ENCODE measurements at regions of chr11 and their contacts with region 1.

Region 1: GRCh38 chr11:75814686-75815344 is at the start of gene UVRAG:
- DNase-seq: peak; percentile 100
- ATAC-seq: peak; percentile 82
- H3K4me3 ChIP-seq: peak within 1 kb of the TSS; percentile 81
- H3K27ac ChIP-seq: peak within 1 kb of the TSS; percentile 64
- H3K4me1 ChIP-seq: peaks cover 36% of the 10 kb centered on the region
- H3K27me3 ChIP-seq: no peaks in the 10 kb centered on the region
- CTCF ChIP-seq: no peak
- total RNA-seq, gene UVRAG: 13.0 and 14.9 TPM in 2 replicates

Region 2: GRCh38 chr11:75328426-75329277 is 486.2 kb before region 1 on chr11:
- CTCF ChIA-PET with region 1: no interaction called
- POLR2A ChIA-PET with region 1: interaction called, 23 read pairs
- intact Hi-C with region 1: no loop called
- DNase-seq: peak; percentile 85
- ATAC-seq: peak; percentile 69
- H3K4me3 ChIP-seq: no peak overlapping the region
- H3K27ac ChIP-seq: no peak overlapping the region
- H3K4me1 ChIP-seq: peaks cover 30% of the 10 kb centered on the region
- H3K27me3 ChIP-seq: no peaks in the 10 kb centered on the region
- CTCF ChIP-seq: peak; percentile 93

Region 3: GRCh38 chr11:75802913-75803820 is 11.6 kb before region 1 on chr11:
- CTCF ChIA-PET with region 1: interaction called, 9 read pairs
- POLR2A ChIA-PET with region 1: interaction called, 11 read pairs
- intact Hi-C with region 1: no loop called
- DNase-seq: peak; percentile 84
- ATAC-seq: peak; percentile 96
- H3K4me3 ChIP-seq: no peak overlapping the region
- H3K27ac ChIP-seq: no peak overlapping the region
- H3K4me1 ChIP-seq: peaks cover 9% of the 10 kb centered on the region; the same call in 1 of the 2 replicates
- H3K27me3 ChIP-seq: no peaks in the 10 kb centered on the region
- CTCF ChIP-seq: peak; percentile 97

Region 4: DNA sequence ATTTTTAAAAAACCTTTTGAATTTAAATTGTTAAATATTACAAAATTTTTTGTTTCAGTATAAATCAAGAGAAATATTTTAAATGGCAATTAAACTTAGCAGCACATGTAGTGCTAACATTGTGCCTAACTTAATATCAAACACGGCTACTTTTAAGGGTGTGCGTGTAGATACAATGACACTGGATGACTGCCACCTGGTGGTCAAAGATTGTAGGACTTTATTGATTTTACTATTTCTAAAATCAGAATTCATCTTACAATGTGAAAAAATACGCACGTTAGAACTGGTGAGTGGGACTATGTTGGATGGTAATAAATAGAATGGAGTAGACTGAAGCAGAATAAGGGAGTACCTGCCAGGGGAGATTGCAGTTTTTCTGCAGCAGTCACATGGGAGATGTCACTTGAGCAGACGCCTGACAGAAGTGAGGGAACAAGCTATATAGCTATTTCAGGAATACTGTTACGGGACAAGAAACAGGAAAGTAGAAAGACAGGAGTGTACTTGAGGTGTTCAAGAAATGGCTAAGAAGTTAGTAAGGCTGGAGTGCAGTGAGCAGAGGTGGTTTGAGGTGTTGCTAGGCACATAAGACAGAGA is 53.1 kb after region 1 on chr11:
- CTCF ChIA-PET with region 1: no interaction called
- POLR2A ChIA-PET with region 1: interaction called, 4 read pairs
- intact Hi-C with region 1: loop called (anchors 2 kb)
- DNase-seq: peak; percentile 85
- ATAC-seq: peak; percentile 60
- H3K4me3 ChIP-seq: no peak overlapping the region
- H3K27ac ChIP-seq: no peak overlapping the region
- H3K4me1 ChIP-seq: peaks cover 6% of the 10 kb centered on the region
- H3K27me3 ChIP-seq: no peaks in the 10 kb centered on the region
- CTCF ChIP-seq: peak; percentile 94

Region 5: GRCh38 chr11:75878933-75879332 is 64.1 kb after region 1 on chr11:
- CTCF ChIA-PET with region 1: no interaction called
- POLR2A ChIA-PET with region 1: interaction called, 28 read pairs
- intact Hi-C with region 1: no loop called
- DNase-seq: no peak
- ATAC-seq: no peak
- H3K4me3 ChIP-seq: no peak overlapping the region
- H3K27ac ChIP-seq: no peak overlapping the region
- H3K4me1 ChIP-seq: no peaks in the 10 kb centered on the region
- H3K27me3 ChIP-seq: no peaks in the 10 kb centered on the region
- CTCF ChIP-seq: no peak

Region 6: GRCh38 chr11:75996523-75997442 is 182.0 kb after region 1 on chr11:
- CTCF ChIA-PET with region 1: no interaction called
- POLR2A ChIA-PET with region 1: no interaction called
- intact Hi-C with region 1: no loop called
- DNase-seq: no peak
- ATAC-seq: no peak
- H3K4me3 ChIP-seq: no peak overlapping the region
- H3K27ac ChIP-seq: no peak overlapping the region
- H3K4me1 ChIP-seq: no peaks in the 10 kb centered on the region
- H3K27me3 ChIP-seq: no peaks in the 10 kb centered on the region
- CTCF ChIP-seq: no peak

Region 7: DNA sequence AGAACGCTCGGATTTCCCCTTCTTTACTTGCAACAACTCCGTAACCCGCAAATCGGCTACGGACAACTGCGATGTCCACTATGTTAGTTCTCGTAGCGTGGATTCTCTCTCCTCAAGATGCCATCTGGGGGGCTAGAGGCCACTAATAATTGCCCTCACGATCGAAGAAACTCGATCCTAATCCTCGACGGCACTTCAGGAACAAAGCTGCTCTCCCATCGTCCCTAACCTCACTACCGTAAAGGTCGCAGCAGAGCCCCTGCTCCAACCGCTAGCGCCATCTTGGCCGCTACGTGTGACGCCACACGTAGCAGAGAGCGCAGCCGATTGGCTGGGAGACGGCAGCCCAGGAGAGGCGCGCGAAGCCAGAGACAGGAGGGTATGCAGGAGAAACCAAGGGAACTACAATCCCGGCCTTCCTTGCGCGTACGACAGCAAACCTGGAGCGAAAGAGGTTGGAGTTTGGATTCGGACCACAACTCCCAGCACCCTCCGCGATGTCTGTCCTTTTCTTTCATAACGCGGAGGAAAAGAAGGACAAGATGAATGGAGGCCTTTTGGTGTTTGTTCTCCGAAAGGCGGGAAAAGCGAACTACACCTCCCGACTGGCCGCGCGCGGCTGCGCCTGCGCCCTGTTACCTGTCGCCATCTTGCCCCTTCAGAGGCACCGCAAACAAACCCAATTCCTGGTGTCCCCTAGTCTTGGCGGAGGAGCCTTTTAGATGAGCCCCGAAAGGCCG is 629.7 kb after region 1 on chr11 and contains the start of gene EMSY:
- CTCF ChIA-PET with region 1: no interaction called
- POLR2A ChIA-PET with region 1: no interaction called
- intact Hi-C with region 1: loop called (anchors 10 kb)
- DNase-seq: peak; percentile 99
- ATAC-seq: peak; percentile 94
- H3K4me3 ChIP-seq: peak within 1 kb of the TSS; percentile 81
- H3K27ac ChIP-seq: peak within 1 kb of the TSS; percentile 66
- H3K4me1 ChIP-seq: peaks cover 13% of the 10 kb centered on the region
- H3K27me3 ChIP-seq: no peaks in the 10 kb centered on the region
- CTCF ChIP-seq: no peak
- total RNA-seq, gene EMSY: 33.0 and 51.1 TPM in 2 replicates